ENCODE measurements at regions of chr12 and their contacts with region 1.

Region 1: DNA sequence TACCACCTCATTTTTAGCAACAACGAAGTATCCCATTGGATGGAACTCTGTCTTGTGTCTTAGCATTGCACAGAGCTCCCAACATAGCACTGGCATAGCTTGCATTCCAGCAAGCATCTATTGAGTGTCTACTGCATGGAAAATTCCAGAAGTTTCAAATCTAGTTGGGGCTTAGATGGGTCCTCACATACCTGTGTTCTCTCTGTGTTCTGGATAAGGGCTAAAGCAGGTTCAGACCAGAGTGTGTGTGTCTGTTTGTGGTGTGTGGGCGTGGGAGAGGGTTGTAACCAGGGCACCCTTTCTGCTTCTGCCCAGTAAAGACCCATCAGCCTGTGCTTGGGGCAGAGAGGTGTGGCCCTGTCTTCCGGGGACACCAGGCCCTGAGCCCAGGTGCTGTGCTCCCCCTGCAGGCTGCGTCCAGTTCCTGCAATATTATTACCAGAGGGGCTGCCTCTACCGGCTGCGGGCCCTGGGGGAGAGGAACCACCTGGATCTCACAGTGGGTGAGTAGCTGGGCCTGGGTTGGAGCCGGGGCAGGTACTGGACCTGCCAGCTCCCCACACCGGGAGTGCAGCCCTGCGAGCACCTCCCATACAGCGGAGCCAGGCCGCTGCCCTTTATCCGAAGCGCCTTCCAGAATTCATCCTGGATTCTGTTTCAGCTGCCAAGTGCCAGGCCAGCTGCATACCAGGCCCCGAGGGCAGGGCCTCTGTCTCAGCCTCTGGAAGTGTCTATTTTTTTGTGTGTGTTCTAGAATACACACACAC is 20.3 kb downstream of the RHOF start:
- DNase-seq: no peak
- H3K4me3 ChIP-seq: no peak overlapping the region
- CTCF ChIP-seq: peak; percentile 88

Region 2: GRCh38 chr12:121688966-121689365 is 84.2 kb before region 1 on chr12:
- CTCF ChIA-PET with region 1: interaction called, 229 read pairs
- POLR2A ChIA-PET with region 1: no interaction called
- DNase-seq: no peak
- H3K4me3 ChIP-seq: no peak overlapping the region
- CTCF ChIP-seq: no peak

Region 3: GRCh38 chr12:121697098-121697698 is 76.0 kb before region 1 on chr12:
- CTCF ChIA-PET with region 1: interaction called, 229 read pairs
- POLR2A ChIA-PET with region 1: no interaction called
- DNase-seq: no peak
- H3K4me3 ChIP-seq: no peak overlapping the region
- CTCF ChIP-seq: no peak

Region 4: DNA sequence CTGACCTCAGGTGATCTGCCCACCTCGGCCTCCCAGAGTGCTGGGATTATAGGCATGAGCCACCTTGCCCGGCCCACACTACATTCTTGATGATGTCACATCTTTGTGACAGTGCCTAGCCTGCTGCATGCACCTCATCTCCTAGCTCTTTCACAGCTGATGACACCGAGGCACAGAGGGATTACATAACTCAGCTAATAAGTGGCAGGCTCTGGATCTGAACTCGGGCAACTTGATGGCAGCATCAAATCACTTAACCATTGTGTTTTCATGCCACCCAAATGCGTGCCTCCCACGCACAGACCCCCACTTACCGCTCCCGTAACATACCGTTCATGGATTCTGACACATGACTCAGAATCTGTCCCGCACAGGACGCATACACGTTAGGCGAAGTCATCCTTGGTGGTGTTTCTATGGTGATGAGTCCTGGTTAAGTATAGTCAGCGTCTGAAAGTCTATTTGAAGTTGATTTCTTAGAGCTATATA is 53.2 kb before region 1 on chr12:
- CTCF ChIA-PET with region 1: interaction called, 16 read pairs
- POLR2A ChIA-PET with region 1: no interaction called
- DNase-seq: peak; percentile 44
- H3K4me3 ChIP-seq: no peak overlapping the region
- CTCF ChIP-seq: no peak

Region 5: DNA sequence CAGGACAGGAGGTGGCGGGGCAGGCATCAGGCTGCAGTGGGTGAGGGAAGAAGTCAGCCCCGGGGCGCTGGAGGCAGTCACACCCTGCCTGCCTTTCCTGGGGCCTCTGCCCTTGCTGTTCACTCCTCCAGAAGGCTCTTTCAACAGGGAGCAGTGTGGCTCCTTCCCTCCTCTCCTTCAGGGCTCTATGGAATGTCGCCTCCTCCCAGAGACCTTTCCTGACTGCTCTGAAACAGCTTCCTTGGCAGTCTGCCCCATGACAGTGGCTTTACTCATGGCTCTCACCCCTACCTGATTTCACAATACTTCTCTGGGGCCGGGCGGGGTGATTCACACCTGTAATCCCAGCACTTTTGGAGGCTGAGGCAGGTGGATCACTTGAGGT is 13.2 kb after region 1 on chr12:
- CTCF ChIA-PET with region 1: interaction called, 1,100 read pairs
- POLR2A ChIA-PET with region 1: no interaction called
- DNase-seq: no peak
- H3K4me3 ChIP-seq: no peak overlapping the region
- CTCF ChIP-seq: no peak

Region 6: DNA sequence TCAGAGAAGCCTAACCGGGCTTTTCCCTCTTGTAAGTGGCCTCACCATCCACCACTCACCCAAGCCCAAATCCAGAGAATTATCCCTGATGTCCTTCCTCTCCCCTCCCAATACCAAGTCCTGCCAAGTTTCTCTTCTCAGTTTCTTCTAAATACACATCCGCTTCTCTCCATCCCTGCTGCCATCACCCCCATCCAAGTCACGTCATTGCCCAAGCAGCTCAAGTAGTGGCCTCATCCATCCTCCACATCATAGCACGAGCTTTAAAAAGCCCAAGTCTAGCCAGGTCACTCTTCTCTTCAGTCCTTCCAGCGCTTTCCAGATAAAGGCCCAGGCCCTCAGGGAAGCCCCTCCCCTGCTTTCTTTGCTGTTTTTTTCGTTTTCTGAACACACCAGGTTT is 375.5 kb after region 1 on chr12:
- CTCF ChIA-PET with region 1: no interaction called
- POLR2A ChIA-PET with region 1: no interaction called
- DNase-seq: no peak
- H3K4me3 ChIP-seq: no peak overlapping the region
- CTCF ChIP-seq: no peak

Measured in AG04449 (cell line).